Activated CD4-positive, alpha-beta T cell treated with anti-CD3 and anti-CD28 coated beads, Interleukin-2, amount 10 ng/mL, durations not matched to agents 7 days and 5 days (primary cell): ENCODE measurements at regions of chr1 and their contacts with region 1.

Region 1: GRCh38 chr1:226083302-226084101 is 21.0 kb downstream of the H3-3A start:
- DNase-seq: peak; percentile 89
- H3K4me3 Mint-ChIP-seq: peak overlapping the region; percentile 86
- H3K27ac Mint-ChIP-seq: peak overlapping the region; percentile 87
- H3K4me1 Mint-ChIP-seq: peaks cover 9% of the 10 kb centered on the region
- H3K27me3 Mint-ChIP-seq: peaks cover 2% of the 10 kb centered on the region

Region 2: GRCh38 chr1:226044514-226045101 is 38.9 kb before region 1 on chr1:
- CTCF ChIA-PET with region 1: no interaction called
- POLR2A ChIA-PET with region 1: no interaction called
- DNase-seq: no peak
- H3K4me3 Mint-ChIP-seq: no peak overlapping the region
- H3K27ac Mint-ChIP-seq: no peak overlapping the region
- H3K4me1 Mint-ChIP-seq: no peaks in the 10 kb centered on the region
- H3K27me3 Mint-ChIP-seq: peaks cover 7% of the 10 kb centered on the region

Region 3: DNA sequence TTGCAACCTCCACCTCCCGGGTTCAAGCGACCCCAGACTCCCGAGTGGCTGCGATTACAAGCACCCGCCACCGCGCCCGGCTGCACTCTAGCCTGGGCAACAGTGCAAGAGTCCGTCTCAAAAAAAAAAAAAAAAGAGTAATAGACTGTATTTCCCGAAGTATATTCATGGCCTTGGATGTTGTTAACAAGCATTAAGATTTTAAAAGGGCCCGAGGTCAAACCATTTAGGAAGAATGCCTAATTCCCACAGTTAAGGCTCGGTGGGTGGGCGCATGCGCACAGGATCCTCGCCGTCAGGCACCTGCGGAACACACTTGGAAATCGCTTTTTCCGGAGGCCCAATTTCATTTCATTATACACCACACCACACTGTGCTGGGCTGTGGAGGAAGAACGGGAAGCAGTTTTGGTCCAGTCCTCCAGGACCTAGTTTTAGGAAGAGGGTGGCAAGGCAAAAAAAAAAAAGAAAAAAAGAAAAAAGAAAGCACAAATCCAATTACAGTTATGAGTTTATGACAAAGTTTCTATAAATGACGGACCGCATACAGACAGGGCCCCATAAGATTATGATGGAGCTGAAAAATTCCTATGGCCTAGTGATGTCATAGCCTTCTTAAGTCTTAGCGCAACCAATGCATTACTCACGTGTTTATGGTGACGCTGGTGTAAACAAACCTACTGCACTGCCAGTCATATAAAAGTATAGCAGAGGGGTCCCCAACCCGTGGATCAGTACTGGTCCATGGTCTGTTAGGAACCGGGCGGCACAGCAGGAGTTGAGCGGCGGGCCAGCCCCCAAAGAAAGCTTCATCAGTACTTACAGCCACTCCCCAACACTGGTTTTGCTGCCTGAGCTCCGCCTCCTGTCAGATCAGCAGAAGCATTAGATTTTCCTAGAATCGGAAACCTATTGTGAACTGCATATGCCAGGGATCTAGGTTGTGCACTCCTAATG is 17.2 kb after region 1 on chr1:
- CTCF ChIA-PET with region 1: interaction called, 23 read pairs
- POLR2A ChIA-PET with region 1: no interaction called
- DNase-seq: peak; percentile 37
- H3K4me3 Mint-ChIP-seq: peak overlapping the region; percentile 79
- H3K27ac Mint-ChIP-seq: peak overlapping the region; percentile 55
- H3K4me1 Mint-ChIP-seq: peaks cover 15% of the 10 kb centered on the region
- H3K27me3 Mint-ChIP-seq: peaks cover 6% of the 10 kb centered on the region